ENCODE measurements at regions of chr20 and their contacts with region 1.

Region 1: DNA sequence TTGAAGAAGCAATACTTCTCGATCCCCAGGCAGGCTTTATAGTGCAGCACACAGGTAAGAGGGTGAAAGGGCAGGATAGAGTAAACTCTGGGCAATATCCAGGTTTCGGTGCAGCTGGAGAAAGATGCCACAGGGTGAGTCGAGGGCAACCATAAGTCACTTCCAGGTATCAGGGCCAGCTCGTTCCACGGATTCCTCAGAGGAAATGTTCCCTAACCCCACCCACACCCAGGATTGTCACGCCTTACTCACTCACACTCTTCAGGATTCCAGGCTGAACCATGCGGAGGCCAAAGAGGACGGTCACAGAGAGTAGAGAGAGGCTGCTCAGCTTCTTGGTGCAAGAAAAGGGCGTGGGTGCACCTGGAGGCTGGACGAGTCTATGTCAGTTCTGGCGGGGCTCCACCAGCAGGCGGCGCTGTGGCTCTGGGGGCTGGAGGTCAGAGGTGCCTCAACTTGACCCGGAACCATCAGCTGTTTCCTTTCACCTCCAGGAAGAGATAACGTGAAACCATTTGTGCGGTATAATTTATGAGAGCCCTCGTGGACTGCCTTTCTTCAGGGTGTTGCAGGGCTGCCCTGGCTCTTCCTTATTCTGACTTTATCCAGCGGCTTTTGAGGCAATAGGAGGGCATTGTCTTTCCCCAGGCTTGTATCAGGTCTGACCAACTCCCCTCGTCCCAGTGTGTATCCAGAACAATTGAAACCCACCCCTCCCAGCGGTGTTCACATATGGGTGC is 14.5 kb upstream of the WFDC12 start:
- H3K4me3 Mint-ChIP-seq: no peak overlapping the region
- H3K27ac Mint-ChIP-seq: no peak overlapping the region
- H3K4me1 Mint-ChIP-seq: no peaks in the 10 kb centered on the region
- H3K27me3 Mint-ChIP-seq: peaks cover 19% of the 10 kb centered on the region

Region 2: GRCh38 chr20:44866703-44867335 is 271.9 kb before region 1 on chr20:
- intact Hi-C with region 1: no loop called
- H3K4me3 Mint-ChIP-seq: peak overlapping the region; percentile 61
- H3K27ac Mint-ChIP-seq: peak overlapping the region; percentile 26
- H3K4me1 Mint-ChIP-seq: peaks cover 21% of the 10 kb centered on the region
- H3K27me3 Mint-ChIP-seq: peaks cover 10% of the 10 kb centered on the region

Region 3: DNA sequence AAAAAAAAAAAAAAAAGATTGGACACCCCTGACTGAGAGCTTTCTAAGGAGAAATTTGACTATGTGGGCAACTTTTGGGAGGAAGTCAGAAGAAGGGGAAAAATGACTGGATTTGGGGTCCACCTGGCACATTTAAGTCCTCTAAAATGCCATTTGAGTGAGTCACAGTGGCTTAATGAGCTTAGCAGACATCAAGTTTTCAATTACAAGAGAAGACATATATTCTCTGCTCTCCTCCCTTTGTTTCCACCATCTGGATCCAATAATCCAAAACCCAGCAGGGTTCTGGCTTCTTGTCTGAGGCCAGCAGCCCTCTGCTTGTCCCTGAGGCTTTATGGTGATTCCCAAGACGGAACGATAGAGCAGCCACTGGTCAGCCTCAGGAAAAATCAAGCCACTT is 42.9 kb after region 1 on chr20:
- intact Hi-C with region 1: no loop called
- H3K4me3 Mint-ChIP-seq: no peak overlapping the region
- H3K27ac Mint-ChIP-seq: no peak overlapping the region
- H3K4me1 Mint-ChIP-seq: peaks cover 15% of the 10 kb centered on the region
- H3K27me3 Mint-ChIP-seq: peaks cover 3% of the 10 kb centered on the region

Region 4: DNA sequence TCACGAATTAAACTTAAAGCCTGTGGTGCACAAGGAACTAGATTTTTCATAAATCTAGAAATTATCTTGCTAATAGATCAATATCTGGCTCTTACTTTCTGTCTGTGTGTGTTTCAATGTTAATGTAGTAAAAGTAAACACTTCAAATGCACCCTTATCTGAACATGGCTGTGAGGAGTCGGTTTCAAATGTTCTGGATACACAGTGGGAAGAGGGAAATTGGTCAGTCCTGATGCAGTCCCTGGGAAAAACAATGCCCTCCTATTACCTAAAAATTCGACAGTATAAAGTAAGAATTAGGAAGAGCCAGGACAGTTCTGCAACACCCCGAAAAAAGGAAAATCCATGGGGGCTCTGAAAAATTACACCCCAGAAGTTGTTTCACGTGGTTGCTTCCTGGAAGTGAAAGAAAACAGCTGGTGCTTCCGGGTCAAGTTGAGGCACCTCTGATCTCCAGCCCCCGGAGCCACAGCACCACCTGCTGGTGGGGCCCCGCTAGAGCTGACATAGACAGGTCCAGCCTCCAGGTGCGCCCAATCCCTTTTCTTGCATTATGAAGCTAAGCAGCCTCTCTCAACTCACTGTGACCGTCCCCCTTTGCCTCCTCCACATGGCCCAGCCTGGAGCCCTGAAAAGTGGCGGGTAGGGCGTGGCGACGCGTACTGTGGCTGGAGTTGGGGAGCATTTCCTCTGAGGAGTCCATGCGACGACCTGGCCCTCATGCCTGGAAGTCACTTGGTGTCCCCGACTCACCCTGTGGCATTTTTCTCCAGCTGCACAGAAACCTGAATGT is 90.7 kb after region 1 on chr20:
- intact Hi-C with region 1: loop called (anchors 2 kb)
- H3K4me3 Mint-ChIP-seq: no peak overlapping the region
- H3K27ac Mint-ChIP-seq: no peak overlapping the region
- H3K4me1 Mint-ChIP-seq: no peaks in the 10 kb centered on the region
- H3K27me3 Mint-ChIP-seq: peaks cover 37% of the 10 kb centered on the region

Region 5: DNA sequence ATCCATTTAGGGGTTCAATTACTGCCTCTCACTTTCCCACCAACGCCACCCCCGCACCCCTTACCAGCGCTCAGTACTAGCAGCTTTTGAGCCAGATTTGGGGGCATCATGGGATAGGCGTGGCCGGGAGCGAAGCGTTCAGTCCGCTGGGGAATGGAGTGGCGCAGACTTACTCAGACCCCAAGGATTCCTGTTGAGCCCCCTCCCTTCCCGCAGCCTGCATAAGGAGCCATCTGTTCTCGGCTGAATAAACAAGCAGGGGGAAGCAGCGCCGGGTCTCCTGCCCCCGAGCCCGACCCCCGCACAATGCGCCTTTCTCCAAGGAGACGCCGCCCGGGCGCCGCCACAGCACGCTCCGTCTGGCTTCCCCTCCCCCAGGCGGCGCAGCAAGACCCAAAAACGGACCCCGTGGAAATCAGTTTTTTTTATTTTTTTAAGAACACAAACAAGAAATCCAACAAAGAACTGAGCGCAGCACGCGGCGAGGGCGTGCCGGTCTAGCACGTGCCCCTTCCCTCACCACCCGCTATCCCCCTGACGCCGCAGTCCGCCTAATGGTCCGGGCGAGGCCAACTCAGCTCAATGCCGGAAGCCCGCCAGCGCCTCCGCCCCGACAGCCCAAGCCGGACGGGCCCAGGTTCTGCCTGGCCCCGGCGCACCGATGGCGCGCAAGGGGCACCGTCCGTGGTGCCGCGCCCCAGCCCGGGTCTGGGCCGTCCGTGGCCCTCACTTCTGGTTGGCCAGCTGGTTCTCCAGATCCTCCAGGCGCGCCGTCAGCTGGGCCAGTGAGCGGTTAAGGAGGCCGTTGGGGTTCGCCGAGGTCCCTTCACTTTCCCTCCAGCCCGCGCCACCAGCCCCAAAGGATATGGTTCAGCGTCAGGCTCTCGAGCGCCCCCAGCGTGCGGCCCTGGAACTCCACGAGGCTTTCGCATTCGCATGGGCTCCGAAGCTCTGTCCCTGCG is 154.6 kb after region 1 on chr20:
- intact Hi-C with region 1: loop called (anchors 1 kb)
- H3K4me3 Mint-ChIP-seq: peak overlapping the region; percentile 70
- H3K27ac Mint-ChIP-seq: peak overlapping the region; percentile 51
- H3K4me1 Mint-ChIP-seq: peaks cover 25% of the 10 kb centered on the region
- H3K27me3 Mint-ChIP-seq: peaks cover 52% of the 10 kb centered on the region

Measured in dendritic cell treated with granulocyte-macrophage colony-stimulating factor and Interleukin-4, amounts not matched to agents 40 ng/mL and 50 ng/mL, for 4 days (primary cell).